HEK293 (cell line): ENCODE measurements at regions of chr6 and their contacts with region 1.

Region 1: DNA sequence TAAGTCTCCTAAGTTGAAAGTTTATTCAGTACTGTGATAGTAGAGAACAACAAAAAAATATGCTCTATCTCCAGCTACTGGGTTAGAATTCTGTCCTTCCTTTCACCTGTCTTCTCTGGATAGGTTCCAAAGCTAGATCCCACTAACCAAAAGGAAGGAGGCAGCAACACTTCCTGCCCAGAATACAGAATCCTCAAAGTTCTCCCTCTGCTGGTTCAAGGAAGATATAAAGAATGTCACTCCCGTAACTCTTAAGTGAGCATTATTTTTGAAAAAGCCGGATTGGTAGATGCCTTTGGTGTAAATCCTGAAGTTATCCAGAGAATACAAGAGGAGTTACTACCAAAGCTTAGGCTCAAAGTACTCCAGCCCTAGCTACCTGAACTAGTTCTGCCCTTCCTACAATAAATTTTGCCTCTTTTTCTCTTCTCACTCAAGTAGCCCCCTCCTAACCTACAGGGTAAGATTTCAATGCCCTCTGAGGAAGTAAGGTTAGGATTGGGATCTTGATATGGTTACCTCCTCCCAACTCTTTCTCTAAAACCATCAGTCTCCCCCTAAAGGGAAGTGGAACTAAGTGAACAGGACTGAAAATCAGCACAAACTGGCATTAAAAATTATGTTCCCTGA is 26.0 kb upstream of the CRIP3 start:
- H3K4me3 ChIP-seq: no peak overlapping the region
- H3K27ac ChIP-seq: no peak overlapping the region
- H3K4me1 ChIP-seq: peaks cover 3% of the 10 kb centered on the region; the same call in 1 of the 2 replicates
- CTCF ChIP-seq: peak; percentile 39; the same call in 1 of the 2 replicates

Region 2: DNA sequence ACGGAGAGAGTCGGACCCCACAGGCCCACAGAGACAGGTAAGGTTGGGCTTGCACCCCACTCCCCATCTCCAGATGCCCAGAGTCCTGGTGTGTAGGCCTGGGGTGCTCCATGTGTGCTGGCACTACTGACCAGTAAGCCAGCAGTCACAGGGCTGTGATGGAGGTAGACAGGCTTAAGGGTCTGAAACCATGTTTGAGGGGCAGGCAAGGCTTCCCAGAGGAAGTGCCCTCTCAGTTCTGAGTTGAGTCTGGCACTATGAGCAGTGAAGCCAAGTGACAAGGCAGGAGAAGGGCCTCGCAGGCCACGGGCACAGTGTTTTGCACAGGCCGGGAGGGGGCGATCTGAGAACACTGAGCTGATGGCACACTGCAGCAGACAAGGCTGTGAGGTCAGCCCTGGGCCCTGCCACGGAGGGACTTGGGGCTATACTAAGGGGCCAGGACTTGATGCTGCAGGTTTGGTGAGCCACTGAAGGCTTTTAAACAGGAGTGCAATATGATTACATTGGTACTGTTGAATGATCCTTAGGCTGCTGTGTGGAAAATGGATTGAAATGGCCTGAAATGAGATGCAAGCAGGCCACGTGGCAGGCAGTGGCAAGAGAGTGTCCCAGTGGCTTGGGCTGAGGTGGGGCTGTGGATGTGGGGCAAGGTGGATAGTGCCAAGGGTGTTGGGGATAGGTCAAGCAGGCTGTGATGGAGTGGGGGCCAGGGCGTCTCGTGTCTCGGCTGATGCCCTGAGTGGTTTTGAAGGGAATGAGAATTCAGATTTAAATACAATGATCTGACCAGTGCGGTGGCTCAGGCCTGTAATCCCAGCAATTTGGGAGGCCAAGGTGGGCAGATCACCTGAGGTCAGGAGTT is 71.0 kb before region 1 on chr6:
- CTCF ChIA-PET with region 1: interaction called, 83 read pairs
- POLR2A ChIA-PET with region 1: interaction called, 4 read pairs
- H3K4me3 ChIP-seq: no peak overlapping the region
- H3K27ac ChIP-seq: no peak overlapping the region
- H3K4me1 ChIP-seq: no peaks in the 10 kb centered on the region
- CTCF ChIP-seq: peak; percentile 88

Region 3: DNA sequence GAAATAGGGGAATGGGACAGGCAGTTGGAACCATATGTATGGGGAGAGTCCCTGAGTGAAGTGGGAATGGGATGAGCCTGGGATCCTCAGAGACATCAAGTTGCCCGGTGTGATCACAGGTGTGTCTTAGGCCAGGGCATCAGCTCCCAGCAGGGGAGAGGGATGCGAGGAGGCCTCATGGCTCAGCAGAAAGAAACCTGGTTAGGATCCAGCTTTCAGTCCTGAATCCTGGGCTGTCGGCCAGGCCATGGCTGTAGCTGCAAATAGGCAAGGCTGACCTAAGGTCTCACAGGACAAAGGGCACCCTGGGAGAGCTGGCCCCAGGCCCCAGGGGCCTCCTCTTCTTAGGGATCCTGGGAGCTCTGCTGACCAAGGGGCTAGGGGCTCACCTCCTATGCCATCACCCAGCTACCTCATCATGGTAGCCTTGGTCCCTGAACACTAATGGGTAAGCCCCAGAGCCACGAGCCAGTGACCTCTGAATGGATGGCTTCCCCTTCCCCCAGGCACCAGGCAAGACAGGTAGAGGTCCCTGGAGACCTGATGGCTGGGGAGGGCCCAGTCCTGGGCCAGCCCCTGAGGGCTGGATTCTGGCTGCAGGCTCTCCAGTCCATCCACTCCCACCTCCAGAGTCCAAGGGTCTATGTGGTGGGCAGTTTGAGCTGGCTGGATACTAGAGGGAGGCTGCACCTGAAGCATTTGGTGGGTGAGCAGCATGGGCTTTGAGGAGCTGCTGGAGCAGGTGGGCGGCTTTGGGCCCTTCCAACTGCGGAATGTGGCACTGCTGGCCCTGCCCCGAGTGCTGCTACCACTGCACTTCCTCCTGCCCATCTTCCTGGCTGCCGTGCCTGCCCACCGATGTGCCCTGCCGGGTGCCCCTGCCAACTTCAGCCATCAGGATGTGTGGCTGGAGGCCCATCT is 36.7 kb before region 1 on chr6 and contains the start of gene SLC22A7:
- CTCF ChIA-PET with region 1: interaction called, 14 read pairs
- POLR2A ChIA-PET with region 1: no interaction called
- H3K4me3 ChIP-seq: no peak within 1 kb of the TSS
- H3K27ac ChIP-seq: no peak within 1 kb of the TSS
- H3K4me1 ChIP-seq: no peaks in the 10 kb centered on the region
- CTCF ChIP-seq: no peak

Region 4: DNA sequence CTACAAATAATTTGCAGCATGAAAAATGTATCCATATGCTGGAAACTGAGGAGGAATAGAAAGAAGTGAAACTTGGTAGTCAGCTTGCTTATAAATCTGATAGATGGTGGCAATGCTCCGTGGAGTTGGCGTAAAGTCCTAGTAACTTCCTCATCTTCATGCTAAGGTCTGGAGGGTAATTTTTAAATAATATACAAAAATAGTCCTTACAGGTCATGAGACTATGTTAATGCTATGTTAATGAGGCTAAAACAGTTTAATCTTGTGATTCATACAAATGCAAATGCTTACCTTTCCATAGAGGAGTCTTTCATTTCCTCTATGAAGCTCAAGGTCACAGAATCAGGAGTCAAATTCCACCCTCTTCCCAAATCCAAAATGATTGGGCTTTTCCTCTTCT is 16.6 kb before region 1 on chr6:
- CTCF ChIA-PET with region 1: interaction called, 28 read pairs
- POLR2A ChIA-PET with region 1: no interaction called
- H3K4me3 ChIP-seq: no peak overlapping the region
- H3K27ac ChIP-seq: no peak overlapping the region
- H3K4me1 ChIP-seq: peaks cover 4% of the 10 kb centered on the region; the same call in 1 of the 2 replicates
- CTCF ChIP-seq: no peak